HEK293 (cell line): ENCODE measurements at regions of chr18 and their contacts with region 1.

Region 1: DNA sequence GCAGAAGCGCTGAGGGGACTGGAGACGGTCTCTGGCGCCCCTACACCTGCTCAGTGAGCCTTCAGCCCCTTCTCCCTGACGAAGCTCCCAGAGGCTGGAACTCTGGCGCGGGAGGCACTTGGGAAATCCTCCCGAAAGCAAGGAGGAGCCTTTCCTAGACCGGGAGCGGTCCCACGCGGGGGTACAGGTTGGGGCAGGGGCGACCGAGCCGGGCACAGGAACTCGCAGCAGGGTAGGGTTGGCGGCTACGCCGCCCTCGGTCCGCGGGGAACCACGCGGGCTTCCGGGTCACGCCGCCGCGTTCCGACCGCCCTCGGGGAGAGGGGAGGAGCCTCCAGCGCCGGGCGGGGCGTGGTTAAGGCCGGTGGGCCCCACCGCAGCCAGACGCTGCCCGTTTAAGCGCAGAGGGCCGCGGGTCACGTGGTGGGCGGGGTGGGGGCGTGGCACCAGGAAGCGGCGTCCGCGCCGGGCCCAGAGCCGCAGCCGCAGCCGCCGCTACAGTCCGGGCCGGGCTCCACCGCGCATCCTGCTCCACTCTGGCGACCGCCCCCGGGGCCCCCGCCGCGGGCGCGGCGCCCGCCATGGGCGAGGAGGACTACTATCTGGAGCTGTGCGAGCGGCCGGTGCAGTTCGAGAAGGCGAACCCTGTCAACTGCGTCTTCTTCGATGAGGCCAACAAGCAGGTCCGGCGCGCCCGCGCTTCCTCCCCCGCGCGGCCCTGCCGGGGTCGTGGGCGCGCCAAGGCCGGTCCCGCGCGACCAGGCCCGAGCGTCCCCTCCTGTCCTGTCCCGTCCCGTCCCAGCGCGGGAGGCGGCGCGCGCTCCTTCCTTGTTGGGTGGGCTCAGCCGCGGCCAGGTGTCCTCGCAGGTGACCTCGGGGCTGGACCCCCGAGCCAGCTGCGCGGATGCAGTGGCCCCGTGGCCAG is at the start of gene RMC1:
- H3K4me3 ChIP-seq: peak within 1 kb of the TSS; percentile 86
- H3K27ac ChIP-seq: peak within 1 kb of the TSS; percentile 48; the same call in 1 of the 2 replicates
- H3K4me1 ChIP-seq: no peaks in the 10 kb centered on the region
- CTCF ChIP-seq: peak; percentile 82

Region 2: DNA sequence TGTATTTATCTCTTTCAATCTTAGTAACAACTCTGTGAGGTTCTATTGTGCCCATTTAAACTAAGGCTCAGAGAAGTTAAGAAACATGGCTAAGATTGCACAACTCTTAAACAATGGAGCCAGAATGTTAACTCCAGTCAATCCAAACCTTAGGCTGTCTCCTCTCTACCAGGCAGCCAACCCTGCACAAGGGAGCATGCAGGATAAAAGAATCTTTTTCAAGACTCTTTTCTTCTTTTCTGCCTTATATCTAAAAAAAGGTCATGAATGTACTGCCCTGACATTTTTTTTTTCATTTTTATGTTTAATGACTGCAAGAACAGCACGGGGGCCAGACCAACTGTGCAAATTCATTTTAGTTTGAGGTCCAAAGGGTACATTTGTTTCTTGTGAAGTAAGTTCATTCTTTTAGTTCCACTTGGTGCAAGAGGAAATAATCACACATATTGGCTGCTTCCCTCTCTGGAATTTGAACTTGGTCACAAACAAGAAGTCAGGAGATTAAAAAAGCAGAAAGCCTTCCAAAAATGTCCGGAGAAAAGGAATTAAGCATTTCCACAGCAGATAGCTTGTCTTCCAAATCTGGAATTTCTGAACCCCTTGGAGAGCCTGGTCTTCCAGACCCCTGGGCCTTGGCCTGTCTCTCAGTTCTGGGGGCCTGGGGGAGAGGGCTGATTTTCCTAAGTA is 146.2 kb before region 1 on chr18:
- CTCF ChIA-PET with region 1: no interaction called
- POLR2A ChIA-PET with region 1: no interaction called
- H3K4me3 ChIP-seq: no peak overlapping the region
- H3K27ac ChIP-seq: no peak overlapping the region
- H3K4me1 ChIP-seq: no peaks in the 10 kb centered on the region
- CTCF ChIP-seq: no peak

Region 3: GRCh38 chr18:23468753-23469459 is 34.4 kb before region 1 on chr18:
- CTCF ChIA-PET with region 1: interaction called, 18 read pairs
- POLR2A ChIA-PET with region 1: no interaction called
- H3K4me3 ChIP-seq: no peak overlapping the region
- H3K27ac ChIP-seq: no peak overlapping the region
- H3K4me1 ChIP-seq: no peaks in the 10 kb centered on the region
- CTCF ChIP-seq: no peak

Region 4: DNA sequence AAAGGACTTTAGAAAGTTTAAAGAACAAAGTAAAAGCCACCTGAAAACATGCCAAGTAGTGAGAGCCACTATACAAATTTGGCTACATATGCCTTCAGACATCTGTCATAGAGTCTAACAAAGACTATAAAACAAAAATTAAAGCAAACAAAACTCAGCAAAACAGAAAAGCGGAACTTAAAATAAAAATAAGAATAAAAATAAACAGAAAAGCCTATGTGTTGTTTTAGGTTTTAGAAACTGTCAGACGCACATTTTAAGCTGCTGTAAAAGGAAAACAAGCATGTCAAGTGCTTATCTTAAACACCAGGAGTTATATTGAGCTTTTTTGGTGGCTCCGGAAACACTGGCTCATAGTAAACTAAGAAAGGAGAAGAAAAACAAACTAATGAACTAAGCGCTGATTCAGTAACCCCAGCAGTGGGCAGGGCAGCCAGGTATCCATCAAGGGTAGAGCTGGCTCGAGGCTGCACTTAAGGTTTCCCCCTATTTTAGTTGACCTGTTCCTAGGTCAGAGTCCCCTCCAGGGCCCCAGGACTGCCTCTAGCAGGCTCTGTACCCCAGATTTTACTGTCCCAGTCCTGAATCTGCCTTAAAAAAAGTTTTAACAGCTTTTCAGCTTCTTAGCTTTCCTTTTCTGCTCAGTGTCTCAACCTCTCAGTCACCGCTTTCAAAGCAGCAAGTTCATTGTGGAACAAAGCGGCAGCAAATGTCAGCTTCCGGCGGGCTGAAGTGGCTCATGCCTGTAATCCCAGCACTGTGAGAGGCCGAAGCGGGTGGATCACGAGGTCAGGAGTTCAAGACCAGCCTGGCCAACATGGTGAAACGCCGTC is 15.3 kb before region 1 on chr18:
- CTCF ChIA-PET with region 1: interaction called, 40 read pairs
- POLR2A ChIA-PET with region 1: interaction called, 5 read pairs
- H3K4me3 ChIP-seq: no peak overlapping the region
- H3K27ac ChIP-seq: peak overlapping the region; percentile 44; the same call in 1 of the 2 replicates
- H3K4me1 ChIP-seq: no peaks in the 10 kb centered on the region; the same call in 1 of the 2 replicates
- CTCF ChIP-seq: no peak

Region 5: DNA sequence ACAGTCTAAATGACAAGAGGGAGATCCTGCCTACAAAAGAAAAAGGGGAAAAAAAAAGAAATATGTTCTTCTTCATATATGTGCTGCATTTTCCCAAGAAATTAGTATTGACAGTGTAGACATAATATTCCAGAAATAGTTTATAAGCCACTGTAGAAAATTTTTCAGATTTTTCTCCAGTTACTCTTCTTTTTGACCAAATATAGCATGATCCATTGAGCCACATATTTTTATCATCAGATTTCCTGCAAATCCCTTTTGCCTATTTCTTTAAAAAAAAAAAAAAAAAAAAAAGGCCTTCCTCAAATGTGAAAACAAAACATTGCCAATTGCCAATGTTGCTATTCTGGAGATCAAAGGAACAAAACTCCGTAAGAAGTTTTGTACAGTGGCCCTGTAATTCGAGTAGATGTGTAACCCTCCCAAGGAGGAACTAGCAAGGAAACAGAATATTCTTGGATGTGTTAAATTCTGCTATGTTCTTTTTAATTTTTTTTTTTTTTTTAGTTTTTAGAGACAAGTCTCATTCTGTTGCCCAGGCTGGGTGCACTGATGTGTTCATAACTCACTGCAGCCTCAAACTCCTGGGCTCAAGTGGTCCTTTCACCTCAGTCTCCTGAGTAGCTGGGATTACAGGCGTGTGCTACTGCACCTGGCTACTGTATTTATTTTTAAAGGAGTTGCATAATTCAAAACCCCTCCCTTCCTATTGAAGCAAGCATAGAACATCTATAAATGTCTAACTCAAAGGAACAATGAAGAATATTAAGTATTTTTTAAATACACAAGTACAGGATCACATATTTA is 623.1 kb after region 1 on chr18:
- CTCF ChIA-PET with region 1: no interaction called
- POLR2A ChIA-PET with region 1: no interaction called
- H3K4me3 ChIP-seq: no peak overlapping the region
- H3K27ac ChIP-seq: no peak overlapping the region
- H3K4me1 ChIP-seq: 0 out of 2 replicates have a peak, but pooled peaks cover 3% of the 10 kb centered on the region
- CTCF ChIP-seq: no peak